Cardiac septum (tissue), 1 donor: ENCODE measurements at regions of chr14 and their contacts with region 1.

Region 1: GRCh38 chr14:104094709-104095438 is 9.4 kb downstream of the ASPG start:
- DNase-seq: no peak

Region 2: GRCh38 chr14:103989964-103990363 is 104.9 kb before region 1 on chr14:
- intact Hi-C with region 1: no loop called
- DNase-seq: no peak

Region 3: DNA sequence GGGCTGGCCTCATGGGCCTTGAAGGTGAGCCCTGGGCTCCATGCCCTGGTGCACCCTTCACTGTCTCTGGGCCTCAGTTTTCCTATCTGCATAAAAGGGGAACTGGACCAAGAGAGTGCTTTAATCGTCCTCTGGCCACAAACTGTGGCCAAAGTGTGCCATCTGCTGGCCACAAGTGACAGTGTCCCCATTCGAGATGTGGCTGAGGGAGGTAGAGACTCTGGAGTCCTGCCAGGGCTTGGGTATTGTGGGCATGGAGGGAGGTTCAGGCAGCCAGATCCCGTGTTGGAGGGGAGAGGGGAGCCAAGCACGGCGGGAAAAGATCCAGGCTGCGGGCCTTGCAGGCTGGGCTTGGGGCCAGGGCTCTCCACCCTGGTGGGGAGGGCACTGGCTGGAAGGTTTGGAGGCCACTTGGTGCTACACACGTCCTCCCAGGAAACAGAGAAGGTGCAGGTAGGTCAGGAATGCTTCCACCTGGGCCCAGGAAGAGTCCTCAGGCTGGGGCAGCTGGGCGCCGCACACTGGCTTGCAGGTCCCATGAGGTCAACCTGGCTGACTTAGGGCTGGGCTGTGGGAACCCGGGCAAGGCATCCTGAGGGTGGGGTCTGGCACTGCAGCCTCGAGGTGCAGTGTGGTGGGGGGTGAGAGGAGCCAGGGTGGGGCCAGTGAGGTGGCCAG is 36.2 kb after region 1 on chr14:
- intact Hi-C with region 1: loop called (anchors 5 kb)
- DNase-seq: no peak